Transverse colon (tissue), 4 donors: ENCODE measurements at regions of chr12 and their contacts with region 1.

Region 1: DNA sequence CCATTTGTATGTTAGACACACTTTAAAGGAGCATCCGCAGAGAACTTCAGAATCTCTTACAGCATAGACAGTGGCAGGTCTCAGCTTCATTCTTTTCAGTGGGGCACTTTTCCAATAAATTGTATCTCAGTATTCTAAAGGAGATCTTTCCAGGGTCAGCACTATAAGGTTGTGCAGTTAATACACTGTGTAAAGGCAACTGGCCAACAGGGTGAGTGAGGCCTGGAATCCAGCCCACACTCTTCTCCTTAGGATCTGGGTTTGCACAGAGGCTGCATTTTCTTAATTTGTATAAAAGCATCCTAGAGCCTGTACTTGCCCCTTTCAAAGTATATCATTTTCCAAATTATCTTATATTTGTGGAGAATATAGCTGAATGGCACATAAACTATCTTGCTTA is 94.2 kb downstream of the MYF5 start:
- DNase-seq: no peak
- H3K4me3 ChIP-seq: no peak overlapping the region
- H3K27ac ChIP-seq: no peak overlapping the region
- H3K4me1 ChIP-seq: no peaks in the 10 kb centered on the region
- H3K27me3 ChIP-seq: no peaks in the 10 kb centered on the region
- CTCF ChIP-seq: no peak
- EP300 ChIP-seq: no peak
- POLR2A ChIP-seq: no peak

Region 2: DNA sequence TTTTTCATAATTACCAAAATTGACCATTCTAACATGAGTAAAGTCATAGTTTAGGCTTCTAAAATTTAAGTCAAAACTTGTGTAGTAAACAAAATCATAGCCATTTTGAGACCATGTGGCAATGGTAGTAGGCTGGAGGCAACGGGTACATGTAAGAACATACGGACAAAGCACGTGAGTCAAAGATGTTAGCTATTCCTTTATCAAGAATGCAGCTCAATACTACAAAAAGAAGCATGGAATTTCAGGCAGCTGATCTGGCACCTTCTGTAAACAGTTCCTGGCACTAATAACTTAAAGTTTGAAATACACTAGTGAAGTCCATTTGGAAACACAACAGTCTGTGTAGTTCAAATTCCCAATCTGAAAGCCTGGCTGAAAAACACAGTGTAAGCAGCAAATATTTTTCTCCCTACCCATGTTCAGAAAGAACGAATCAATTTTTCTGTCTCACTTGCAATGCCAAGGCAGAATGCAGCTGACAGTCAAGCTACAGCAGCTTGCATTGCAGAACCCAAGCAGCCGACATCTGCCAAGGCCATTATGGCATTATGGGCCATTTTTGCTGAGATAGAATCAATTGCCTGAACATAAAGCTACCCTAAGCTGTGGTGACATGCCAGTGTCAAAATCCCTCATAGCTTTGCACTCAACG is 64.9 kb before region 1 on chr12:
- in situ Hi-C with region 1: no loop called
- intact Hi-C with region 1: no loop called
- DNase-seq: no peak
- H3K4me3 ChIP-seq: no peak overlapping the region
- H3K27ac ChIP-seq: no peak overlapping the region
- H3K4me1 ChIP-seq: no peaks in the 10 kb centered on the region
- H3K27me3 ChIP-seq: no peaks in the 10 kb centered on the region
- CTCF ChIP-seq: no peak
- EP300 ChIP-seq: no peak
- POLR2A ChIP-seq: no peak

Region 3: DNA sequence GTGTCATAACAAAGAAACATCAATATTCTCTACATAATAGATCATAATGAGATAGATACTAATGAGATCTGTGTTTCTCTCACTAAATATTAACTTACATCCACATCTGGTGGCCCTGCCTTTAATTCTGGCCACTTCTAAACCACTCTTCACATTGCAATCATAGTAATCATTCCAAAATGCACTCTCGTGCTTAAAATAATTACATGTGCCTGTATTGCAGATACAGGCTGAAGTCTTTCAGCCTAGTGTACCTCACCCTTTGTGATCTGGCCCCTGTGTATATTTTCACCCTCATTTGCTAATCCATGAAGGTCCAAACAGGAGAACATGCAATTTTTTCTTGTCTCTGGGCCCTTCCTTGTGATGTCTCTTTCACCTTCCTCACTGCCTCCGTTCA is 18.9 kb after region 1 on chr12:
- in situ Hi-C with region 1: no loop called
- intact Hi-C with region 1: loop called (anchors 1 kb)
- DNase-seq: no peak
- H3K4me3 ChIP-seq: no peak overlapping the region
- H3K27ac ChIP-seq: no peak overlapping the region
- H3K4me1 ChIP-seq: no peaks in the 10 kb centered on the region
- H3K27me3 ChIP-seq: no peaks in the 10 kb centered on the region
- CTCF ChIP-seq: no peak
- EP300 ChIP-seq: no peak
- POLR2A ChIP-seq: no peak